Activated B cell treated with CpG ODN at 0.5 μM for 24 hours (primary cell): ENCODE measurements at regions of chr19 and their contacts with region 1.

Region 1: DNA sequence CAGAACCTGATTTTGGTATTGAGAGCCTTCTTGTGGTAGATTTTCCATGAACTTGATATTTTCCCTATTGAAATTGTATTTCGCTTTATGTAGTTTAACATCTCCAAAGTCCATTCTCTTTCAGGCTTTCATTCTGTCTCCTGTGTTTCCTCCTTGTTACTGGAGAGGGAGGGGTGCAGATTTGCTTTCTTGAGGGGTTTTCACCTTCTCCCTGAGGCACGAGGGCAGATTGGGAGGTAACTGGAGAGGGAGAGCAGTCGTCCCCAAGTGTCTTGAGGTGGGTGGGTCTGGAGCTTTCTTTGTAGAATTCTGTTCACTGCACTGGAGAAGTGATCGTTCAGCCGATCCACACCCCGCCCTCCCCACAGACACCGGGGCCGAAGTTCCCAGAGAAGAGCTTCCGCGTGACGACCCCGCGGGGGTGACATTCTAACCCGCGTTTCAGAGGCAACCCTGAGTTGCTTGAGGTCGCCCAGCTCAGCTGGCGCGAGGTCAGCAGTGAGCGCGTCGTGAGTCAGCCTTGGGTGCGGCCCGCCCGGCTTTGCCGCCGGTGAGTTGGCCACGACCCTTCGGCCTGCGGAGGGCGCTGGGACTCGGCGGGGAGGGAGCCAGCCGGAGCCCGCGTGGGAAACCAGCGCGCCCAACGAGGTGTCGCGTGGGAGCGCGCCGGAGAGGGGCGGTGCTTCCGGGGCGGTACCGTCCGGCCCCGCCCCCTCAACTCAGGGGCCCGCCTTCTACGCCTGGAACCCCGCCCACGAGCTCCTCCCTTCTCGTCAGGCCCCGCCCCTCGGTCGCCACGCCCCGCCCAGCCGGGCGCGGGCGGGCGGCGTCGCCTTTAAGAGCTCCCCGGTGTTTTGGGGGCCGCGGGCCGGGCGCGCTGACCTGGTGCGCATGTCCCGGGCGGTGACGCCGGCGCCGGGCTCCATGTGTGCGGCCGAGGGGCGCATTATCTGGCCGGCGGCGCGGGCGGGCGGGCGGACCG is at the start of gene GATAD2A:
- DNase-seq: peak; percentile 96
- ATAC-seq: peak; percentile 86
- H3K4me3 Mint-ChIP-seq: peak within 1 kb of the TSS; percentile 97
- H3K27ac Mint-ChIP-seq: peak within 1 kb of the TSS; percentile 89
- H3K4me1 Mint-ChIP-seq: peaks cover 55% of the 10 kb centered on the region
- H3K27me3 Mint-ChIP-seq: no peaks in the 10 kb centered on the region
- CTCF ChIP-seq: no peak
- total RNA-seq, gene GATAD2A: 116 and 126 TPM in 2 replicates

Region 2: DNA sequence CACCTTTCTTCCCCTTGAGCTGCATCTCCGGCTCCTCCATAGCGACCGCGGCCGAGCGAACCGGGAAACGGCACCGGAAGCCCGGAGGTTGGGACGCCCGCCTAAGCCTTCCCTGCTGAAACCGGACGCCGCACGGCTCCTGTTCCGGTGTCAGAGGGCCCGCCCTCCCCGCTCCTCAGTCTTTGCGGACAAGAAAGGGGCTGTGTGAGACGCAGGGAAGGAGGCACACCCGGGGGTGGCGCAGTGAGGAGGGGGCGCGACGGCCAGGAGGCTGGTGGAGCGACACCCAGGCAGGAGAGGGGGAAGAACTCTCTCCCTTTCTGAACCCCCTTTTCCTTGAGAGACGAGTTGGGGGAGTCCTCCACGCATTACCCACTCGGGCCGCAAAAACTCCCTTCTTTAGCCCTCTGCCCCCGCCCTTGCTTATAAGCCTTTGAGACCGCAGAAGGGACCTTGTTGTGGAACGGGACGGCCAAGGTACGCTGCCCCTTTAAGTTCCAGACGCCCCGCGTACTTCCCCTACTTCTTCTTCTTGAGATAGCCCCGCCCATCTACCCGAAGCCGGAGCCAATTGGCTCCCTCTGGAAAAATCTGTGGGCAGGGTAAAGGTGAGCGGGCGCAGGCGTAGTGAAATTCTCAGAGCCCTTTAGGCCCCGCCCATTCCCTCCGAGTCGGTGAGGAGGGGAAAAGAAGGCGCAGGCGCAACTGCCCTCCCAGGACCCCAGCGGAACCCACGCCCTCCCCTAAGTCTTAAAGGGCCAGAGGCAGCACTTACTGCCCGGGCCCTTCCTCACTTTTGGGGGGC is 212.9 kb before region 1 on chr19 and contains the starts of genes BORCS8 and RFXANK:
- CTCF ChIA-PET with region 1: no interaction called
- POLR2A ChIA-PET with region 1: no interaction called
- intact Hi-C with region 1: loop called (anchors 2 kb)
- DNase-seq: peak; percentile 91
- ATAC-seq: peak; percentile 85
- H3K4me3 Mint-ChIP-seq: peak within 1 kb of the TSS; percentile 99
- H3K27ac Mint-ChIP-seq: peak within 1 kb of the TSS; percentile 99
- H3K4me1 Mint-ChIP-seq: peaks cover 49% of the 10 kb centered on the region
- H3K27me3 Mint-ChIP-seq: no peaks in the 10 kb centered on the region
- CTCF ChIP-seq: no peak
- total RNA-seq, gene BORCS8: 51.8 and 52.3 TPM in 2 replicates
- total RNA-seq, gene RFXANK: 95.4 and 96.9 TPM in 2 replicates

Region 3: DNA sequence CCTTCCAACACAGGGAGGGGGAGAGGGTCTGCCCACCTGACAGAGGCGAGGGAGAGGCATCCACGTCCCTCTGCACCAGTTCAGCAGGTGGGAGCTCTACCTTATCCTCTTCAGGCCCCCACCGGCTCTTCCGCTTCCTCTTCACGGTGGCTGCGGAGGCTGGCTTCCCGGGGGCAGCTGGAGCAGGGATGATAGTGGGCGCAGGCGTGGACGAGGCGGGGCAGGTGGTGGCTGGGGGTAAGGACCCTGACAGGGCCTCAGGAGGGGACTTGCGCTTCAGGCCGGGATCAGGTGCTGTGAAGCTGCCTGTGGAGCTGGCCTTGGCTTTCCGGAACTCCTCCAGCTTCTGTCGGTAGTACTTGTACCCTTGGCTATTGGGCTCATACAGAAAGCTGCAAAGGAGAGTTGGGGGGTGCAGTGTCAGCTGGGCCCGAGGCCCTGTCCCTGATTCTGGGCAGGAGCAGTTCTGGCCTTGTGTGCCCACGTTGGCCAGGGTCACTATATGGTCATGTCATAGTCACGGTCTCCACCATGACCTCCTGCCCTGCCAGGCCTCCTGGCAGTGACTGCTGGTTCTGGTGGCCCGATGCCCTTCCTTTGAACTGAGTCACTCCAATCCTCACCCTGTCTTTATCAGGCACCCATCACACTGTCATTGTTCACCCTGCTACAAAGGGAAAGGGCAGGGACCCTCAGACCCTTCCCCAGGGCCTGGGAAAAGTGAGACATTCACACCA is 108.0 kb before region 1 on chr19:
- CTCF ChIA-PET with region 1: no interaction called
- POLR2A ChIA-PET with region 1: no interaction called
- intact Hi-C with region 1: no loop called
- DNase-seq: no peak
- ATAC-seq: no peak
- H3K4me3 Mint-ChIP-seq: no peak overlapping the region
- H3K27ac Mint-ChIP-seq: no peak overlapping the region
- H3K4me1 Mint-ChIP-seq: no peaks in the 10 kb centered on the region
- H3K27me3 Mint-ChIP-seq: no peaks in the 10 kb centered on the region
- CTCF ChIP-seq: no peak

Region 4: DNA sequence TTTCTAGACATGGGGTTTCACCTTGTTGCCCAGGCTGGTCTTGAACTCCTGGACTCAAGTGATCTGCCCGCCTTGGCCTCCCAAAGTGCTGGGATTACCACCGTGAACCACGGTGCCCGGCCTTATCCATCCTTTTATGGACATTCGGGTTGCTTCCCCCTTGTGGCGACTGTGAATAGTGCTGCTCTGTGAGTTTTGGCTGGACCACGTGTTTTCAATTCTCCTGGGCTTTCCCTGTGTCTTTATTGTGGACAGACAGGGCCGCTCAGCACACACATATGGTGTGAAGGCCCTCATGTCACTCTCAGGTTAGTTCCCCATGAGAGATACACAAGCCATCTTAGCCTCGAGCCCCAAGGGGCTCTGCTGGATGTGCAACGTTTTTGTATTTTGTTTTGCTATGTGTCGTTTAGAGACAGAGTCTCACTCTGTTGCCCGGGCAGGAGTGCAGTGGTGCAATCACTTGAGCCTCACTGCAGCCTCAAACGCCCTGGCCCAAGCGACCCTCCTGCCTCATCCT is 44.0 kb before region 1 on chr19:
- CTCF ChIA-PET with region 1: interaction called, 35 read pairs
- POLR2A ChIA-PET with region 1: interaction called, 12 read pairs
- intact Hi-C with region 1: loop called (anchors 1 kb)
- DNase-seq: peak; percentile 54
- ATAC-seq: peak; percentile 68
- H3K4me3 Mint-ChIP-seq: peak overlapping the region; percentile 74
- H3K27ac Mint-ChIP-seq: peak overlapping the region; percentile 57
- H3K4me1 Mint-ChIP-seq: peaks cover 23% of the 10 kb centered on the region
- H3K27me3 Mint-ChIP-seq: no peaks in the 10 kb centered on the region
- CTCF ChIP-seq: peak; percentile 87

Region 5: GRCh38 chr19:19372656-19373416 is 32.3 kb before region 1 on chr19:
- CTCF ChIA-PET with region 1: interaction called, 35 read pairs
- POLR2A ChIA-PET with region 1: interaction called, 18 read pairs
- intact Hi-C with region 1: no loop called
- DNase-seq: no peak
- ATAC-seq: peak; percentile 98
- H3K4me3 Mint-ChIP-seq: peak overlapping the region; percentile 69
- H3K27ac Mint-ChIP-seq: peak overlapping the region; percentile 94
- H3K4me1 Mint-ChIP-seq: peaks cover 12% of the 10 kb centered on the region
- H3K27me3 Mint-ChIP-seq: no peaks in the 10 kb centered on the region
- CTCF ChIP-seq: no peak

Region 6: GRCh38 chr19:19444681-19445155 is 39.5 kb after region 1 on chr19:
- CTCF ChIA-PET with region 1: no interaction called
- POLR2A ChIA-PET with region 1: interaction called, 6 read pairs
- intact Hi-C with region 1: loop called (anchors 2 kb)
- DNase-seq: no peak
- ATAC-seq: peak; percentile 65
- H3K4me3 Mint-ChIP-seq: peak overlapping the region; percentile 54
- H3K27ac Mint-ChIP-seq: peak overlapping the region; percentile 78
- H3K4me1 Mint-ChIP-seq: peaks cover 64% of the 10 kb centered on the region
- H3K27me3 Mint-ChIP-seq: no peaks in the 10 kb centered on the region
- CTCF ChIP-seq: no peak

Region 7: DNA sequence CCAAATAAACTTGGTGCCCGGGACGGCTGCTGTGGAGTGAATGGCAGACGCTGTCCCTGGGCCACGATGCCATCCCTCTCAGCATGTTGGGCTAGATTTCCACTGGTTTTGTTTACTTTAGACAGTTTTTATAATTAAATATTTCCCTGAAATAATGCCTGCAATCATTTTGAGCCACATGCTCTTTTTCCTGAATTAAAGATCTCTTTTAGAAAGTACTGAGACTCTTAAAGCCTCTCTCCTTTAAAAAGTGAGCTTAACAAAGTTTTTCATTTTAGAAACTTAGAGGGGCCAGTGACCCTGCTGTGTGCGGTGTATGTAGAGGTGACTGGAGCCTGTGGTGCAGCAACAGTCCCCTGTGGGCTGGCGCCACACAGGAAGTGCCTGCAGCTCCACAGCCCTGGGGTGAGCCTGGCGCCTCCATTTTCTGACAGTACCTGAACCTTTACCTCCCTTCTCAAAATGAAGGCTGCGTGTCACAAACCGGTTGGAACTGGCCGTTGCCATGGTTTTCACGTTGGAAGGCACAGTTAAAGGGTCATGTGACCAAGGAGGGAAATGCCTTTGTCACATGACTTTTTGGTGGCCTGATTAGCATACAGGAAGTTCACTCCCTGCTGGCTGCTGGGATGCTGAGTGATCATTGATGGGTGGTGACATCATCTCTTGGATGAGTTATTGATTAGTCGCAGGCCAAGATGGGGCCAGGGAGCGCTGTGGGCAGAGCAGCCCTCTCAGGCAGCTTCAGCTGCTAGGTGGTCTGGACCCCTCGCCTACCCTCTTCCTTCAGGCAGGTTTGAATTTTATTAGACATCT is 83.9 kb after region 1 on chr19:
- CTCF ChIA-PET with region 1: interaction called, 49 read pairs
- POLR2A ChIA-PET with region 1: interaction called, 11 read pairs
- intact Hi-C with region 1: loop called (anchors 1 kb)
- DNase-seq: peak; percentile 53
- ATAC-seq: peak; percentile 62
- H3K4me3 Mint-ChIP-seq: peak overlapping the region; percentile 58
- H3K27ac Mint-ChIP-seq: peak overlapping the region; percentile 91
- H3K4me1 Mint-ChIP-seq: peaks cover 58% of the 10 kb centered on the region
- H3K27me3 Mint-ChIP-seq: no peaks in the 10 kb centered on the region
- CTCF ChIP-seq: no peak